Panc1 (cell line): ENCODE measurements at regions of chr1 and their contacts with region 1.

Region 1: DNA sequence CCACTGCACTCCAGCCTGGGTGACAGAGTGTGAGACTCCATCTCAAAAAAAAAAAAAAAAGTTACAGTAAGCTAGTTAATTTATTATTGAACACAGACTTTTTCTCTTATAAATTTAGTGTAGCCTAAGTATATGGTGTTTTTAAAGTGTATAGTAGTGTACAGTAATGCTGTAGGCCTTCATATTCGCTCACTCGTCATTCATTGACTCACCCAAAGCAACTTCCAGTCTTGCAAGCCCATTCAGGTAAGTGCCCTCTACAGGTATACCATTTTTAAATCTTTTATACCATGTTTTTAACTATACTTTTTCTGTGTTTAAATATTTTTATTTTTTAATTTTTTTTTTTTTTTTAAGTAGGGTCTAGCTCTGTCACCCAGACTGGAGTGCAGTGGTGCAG is 12.1 kb downstream of the POU2F1 start:
- DNase-seq: no peak
- ATAC-seq: no peak
- H3K4me3 ChIP-seq: no peak overlapping the region
- H3K27ac ChIP-seq: no peak overlapping the region
- H3K4me1 ChIP-seq: peaks cover 11% of the 10 kb centered on the region; the same call in 1 of the 2 replicates
- H3K27me3 ChIP-seq: no peaks in the 10 kb centered on the region
- CTCF ChIP-seq: no peak

Region 2: GRCh38 chr1:166884040-166884642 is 348.7 kb before region 1 on chr1:
- CTCF ChIA-PET with region 1: interaction called, 14 read pairs
- POLR2A ChIA-PET with region 1: no interaction called
- in situ Hi-C with region 1: no loop called
- intact Hi-C with region 1: no loop called
- DNase-seq: no peak
- ATAC-seq: peak; percentile 93
- H3K4me3 ChIP-seq: no peak overlapping the region
- H3K27ac ChIP-seq: no peak overlapping the region
- H3K4me1 ChIP-seq: no peaks in the 10 kb centered on the region
- H3K27me3 ChIP-seq: peaks cover 30% of the 10 kb centered on the region
- CTCF ChIP-seq: peak; percentile 75

Region 3: GRCh38 chr1:167210966-167211674 is 21.7 kb before region 1 on chr1:
- CTCF ChIA-PET with region 1: no interaction called
- POLR2A ChIA-PET with region 1: no interaction called
- in situ Hi-C with region 1: no loop called
- intact Hi-C with region 1: no loop called
- DNase-seq: no peak
- ATAC-seq: peak; percentile 42; the same call in 1 of the 2 replicates
- H3K4me3 ChIP-seq: no peak overlapping the region
- H3K27ac ChIP-seq: no peak overlapping the region
- H3K4me1 ChIP-seq: no peaks in the 10 kb centered on the region
- H3K27me3 ChIP-seq: no peaks in the 10 kb centered on the region
- CTCF ChIP-seq: no peak

Region 4: DNA sequence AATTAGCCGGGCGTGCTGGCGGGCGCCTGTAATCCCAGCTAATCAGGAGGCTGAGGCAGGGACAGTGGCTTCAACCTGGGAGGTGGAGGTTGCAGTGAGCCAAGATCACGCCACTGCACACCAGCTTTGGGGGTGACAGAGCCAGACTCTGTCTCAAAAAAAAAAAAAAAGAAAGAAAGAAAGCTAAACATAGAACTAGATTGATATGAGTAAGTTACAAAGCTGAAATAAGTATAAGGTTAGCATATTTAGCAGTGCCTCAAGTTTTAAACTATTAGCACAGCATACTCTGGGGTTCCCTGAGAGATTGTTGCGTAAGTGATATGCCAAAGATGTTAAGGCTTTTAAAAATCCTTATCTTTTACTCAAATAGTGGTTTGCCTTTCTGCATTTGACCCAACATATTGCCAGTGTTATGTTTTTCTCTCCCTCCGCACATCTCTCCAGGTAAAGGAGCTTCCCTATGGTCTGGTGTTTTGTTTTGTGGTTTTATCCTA is 159.4 kb after region 1 on chr1:
- CTCF ChIA-PET with region 1: no interaction called
- POLR2A ChIA-PET with region 1: no interaction called
- in situ Hi-C with region 1: no loop called
- intact Hi-C with region 1: no loop called
- DNase-seq: no peak
- ATAC-seq: no peak
- H3K4me3 ChIP-seq: no peak overlapping the region
- H3K27ac ChIP-seq: no peak overlapping the region
- H3K4me1 ChIP-seq: no peaks in the 10 kb centered on the region
- H3K27me3 ChIP-seq: no peaks in the 10 kb centered on the region
- CTCF ChIP-seq: no peak